ENCODE measurements at regions of chr12 and their contacts with region 1.

Region 1: DNA sequence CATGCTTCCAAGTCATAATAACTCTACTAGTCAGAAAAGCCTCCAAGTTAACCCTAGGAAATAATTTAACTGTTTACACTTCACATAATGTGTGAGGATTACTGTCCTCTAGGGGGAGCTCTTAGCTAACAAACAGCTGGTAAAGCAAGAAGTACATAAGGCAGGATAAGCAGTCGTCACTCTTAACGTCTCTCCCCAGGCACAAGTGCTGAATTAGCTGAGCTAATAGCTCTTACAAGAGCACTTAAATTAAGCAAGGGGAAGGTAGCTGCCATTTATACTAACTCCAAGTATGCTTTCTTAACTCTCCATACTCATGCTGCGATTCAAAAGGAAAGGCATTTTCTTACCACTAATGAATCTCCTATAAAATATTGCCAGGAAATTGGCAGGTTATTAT is 79.3 kb upstream of the TSPAN11 start:
- DNase-seq: peak; percentile 77
- H3K4me3 ChIP-seq: no peak overlapping the region
- H3K27ac ChIP-seq: no peak overlapping the region
- H3K4me1 ChIP-seq: no peaks in the 10 kb centered on the region
- H3K27me3 ChIP-seq: peaks cover 19% of the 10 kb centered on the region; the same call in 1 of the 2 replicates

Region 2: GRCh38 chr12:30985814-30986452 is 138.7 kb after region 1 on chr12:
- in situ Hi-C with region 1: loop called (anchors 5 kb)
- DNase-seq: peak; percentile 77
- H3K4me3 ChIP-seq: no peak overlapping the region
- H3K27ac ChIP-seq: no peak overlapping the region
- H3K4me1 ChIP-seq: no peaks in the 10 kb centered on the region
- H3K27me3 ChIP-seq: no peaks in the 10 kb centered on the region

Region 3: GRCh38 chr12:31238764-31239387 is 391.6 kb after region 1 on chr12:
- in situ Hi-C with region 1: loop called (anchors 10 kb)
- DNase-seq: peak; percentile 81
- H3K4me3 ChIP-seq: peak overlapping the region; percentile 62
- H3K27ac ChIP-seq: no peak overlapping the region
- H3K4me1 ChIP-seq: no peaks in the 10 kb centered on the region
- H3K27me3 ChIP-seq: peaks cover 57% of the 10 kb centered on the region